ENCODE measurements at regions of chr7 and their contacts with region 1.

Region 1: DNA sequence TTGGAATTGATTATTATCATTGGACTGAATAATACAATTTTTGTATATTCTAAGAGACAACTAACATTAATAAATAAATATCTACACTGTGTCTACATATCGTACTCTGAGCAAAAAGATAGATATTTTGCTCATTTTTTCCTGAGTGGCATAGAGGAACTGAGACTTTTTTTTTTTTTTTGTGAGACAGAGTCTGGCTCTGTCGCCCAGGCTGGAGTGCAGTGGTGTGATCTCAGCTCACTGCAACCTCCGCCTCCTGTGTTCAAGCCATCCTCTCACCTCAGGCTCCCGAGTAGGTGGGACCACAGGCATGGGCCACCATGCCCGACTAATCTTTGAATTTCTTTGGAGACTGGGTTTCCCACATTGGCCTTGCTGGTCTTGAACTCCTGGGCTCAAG is 14.0 kb downstream of the KMT2E start:
- DNase-seq: no peak
- H3K4me3 ChIP-seq: no peak overlapping the region
- H3K27ac ChIP-seq: no peak overlapping the region
- H3K4me1 ChIP-seq: no peaks in the 10 kb centered on the region
- H3K27me3 ChIP-seq: no peaks in the 10 kb centered on the region
- CTCF ChIP-seq: no peak

Region 2: DNA sequence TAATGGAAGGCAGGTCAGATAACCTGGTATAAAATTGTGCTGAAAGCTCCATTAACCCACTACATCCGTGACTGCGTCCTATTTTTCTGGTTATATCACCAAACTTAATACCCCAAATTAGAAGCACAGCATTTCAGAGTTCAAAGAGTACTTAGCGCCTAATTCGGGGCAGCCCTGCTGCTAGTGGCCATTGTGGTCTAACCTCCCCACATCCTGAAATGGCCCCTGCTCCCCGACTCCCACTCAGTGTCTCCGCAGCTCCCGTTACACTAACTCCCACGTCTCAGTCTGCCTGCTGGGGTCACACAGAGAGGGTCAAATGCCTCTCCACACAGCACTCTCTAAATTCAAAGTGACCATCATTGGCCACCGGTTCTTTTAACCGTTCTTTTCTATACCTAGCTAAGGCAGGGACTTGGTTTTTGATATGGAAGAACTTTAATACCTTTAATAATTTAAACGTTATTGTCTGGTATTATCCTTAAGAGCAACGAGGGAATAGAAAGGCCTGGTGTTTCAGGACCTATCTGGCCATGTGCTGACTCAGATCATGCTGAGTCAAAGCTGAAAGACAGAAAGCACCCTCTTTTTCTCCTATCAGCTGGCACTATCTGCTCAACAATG is 103.1 kb after region 1 on chr7:
- CTCF ChIA-PET with region 1: no interaction called
- POLR2A ChIA-PET with region 1: no interaction called
- intact Hi-C with region 1: no loop called
- DNase-seq: no peak
- H3K4me3 ChIP-seq: no peak overlapping the region
- H3K27ac ChIP-seq: no peak overlapping the region
- H3K4me1 ChIP-seq: peaks cover 7% of the 10 kb centered on the region
- H3K27me3 ChIP-seq: no peaks in the 10 kb centered on the region
- CTCF ChIP-seq: no peak

Region 3: DNA sequence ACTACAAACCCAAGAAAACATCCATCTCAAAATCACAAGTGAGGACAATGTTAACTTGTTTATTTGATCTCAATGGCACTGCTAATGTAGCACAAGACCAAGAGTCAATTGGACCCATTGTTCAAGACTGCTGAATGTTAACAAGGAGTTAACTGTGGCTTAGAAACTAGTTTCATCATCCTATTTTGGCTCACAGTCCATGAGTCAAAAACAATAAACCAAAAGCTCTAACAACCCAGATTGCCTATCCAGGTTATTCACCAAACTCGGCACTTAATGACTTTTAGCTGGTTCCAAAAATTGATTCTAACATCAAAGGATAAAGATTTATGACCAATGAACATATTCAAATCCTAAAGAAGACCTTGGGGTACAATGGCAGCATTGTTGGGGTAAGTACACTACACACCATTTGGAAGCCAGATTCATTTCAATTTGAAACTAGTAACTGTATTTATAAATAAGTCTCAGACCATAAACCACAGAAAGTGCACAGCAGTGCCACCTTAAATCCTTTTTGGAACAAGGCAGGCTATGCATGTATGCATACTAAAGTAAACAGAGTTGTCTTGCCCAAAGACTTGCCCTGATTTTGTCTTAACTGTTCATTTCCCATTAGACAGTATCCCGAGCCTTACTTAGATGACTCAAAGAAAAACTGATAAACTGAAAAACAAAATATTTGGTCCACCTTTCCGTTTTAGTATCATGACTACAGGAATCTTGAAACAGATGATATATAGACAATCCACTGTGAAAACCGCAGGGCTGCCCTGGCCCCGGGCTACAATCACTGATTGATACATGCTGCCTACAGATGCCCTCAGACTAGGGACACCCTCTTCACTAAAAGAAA is 276.3 kb after region 1 on chr7:
- CTCF ChIA-PET with region 1: interaction called, 12 read pairs
- POLR2A ChIA-PET with region 1: no interaction called
- intact Hi-C with region 1: no loop called
- DNase-seq: no peak
- H3K4me3 ChIP-seq: no peak overlapping the region
- H3K27ac ChIP-seq: no peak overlapping the region
- H3K4me1 ChIP-seq: no peaks in the 10 kb centered on the region
- H3K27me3 ChIP-seq: no peaks in the 10 kb centered on the region
- CTCF ChIP-seq: no peak

Region 4: DNA sequence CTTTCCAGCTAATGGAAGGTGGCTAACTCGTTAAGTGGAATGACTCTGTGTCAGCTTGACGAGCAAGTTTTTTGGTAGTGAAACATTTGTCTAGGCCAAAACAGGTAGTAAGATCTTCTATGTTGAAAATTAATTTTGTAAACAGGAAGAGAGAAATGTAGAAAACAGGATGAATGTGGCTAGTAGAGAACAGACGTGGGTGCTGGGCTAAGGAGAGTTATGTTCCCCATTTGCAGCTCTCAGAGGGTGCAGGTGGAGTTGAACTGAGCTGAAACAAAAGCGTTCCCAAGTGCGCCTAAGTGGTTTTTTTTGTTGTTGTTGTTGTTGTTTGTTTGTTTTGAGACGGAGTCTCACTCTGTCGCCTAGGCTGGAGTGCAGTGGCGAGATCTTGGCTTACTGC is 420.2 kb after region 1 on chr7:
- CTCF ChIA-PET with region 1: interaction called, 10 read pairs
- POLR2A ChIA-PET with region 1: no interaction called
- intact Hi-C with region 1: no loop called
- DNase-seq: no peak
- H3K4me3 ChIP-seq: no peak overlapping the region
- H3K27ac ChIP-seq: no peak overlapping the region
- H3K4me1 ChIP-seq: no peaks in the 10 kb centered on the region
- H3K27me3 ChIP-seq: no peaks in the 10 kb centered on the region
- CTCF ChIP-seq: no peak

Measured in PC-9 (cell line).